B cell (primary cell): ENCODE measurements at regions of chr1 and their contacts with region 1.

Region 1: GRCh38 chr1:52141513-52142219 is at the start of gene ZFYVE9:
- DNase-seq: peak; percentile 85
- ATAC-seq: peak; percentile 85
- H3K4me3 ChIP-seq: peak within 1 kb of the TSS; percentile 30 to 80 (median 61)
- H3K4me3 Mint-ChIP-seq: peak within 1 kb of the TSS; percentile 86
- H3K27ac ChIP-seq: peak within 1 kb of the TSS in 1 of 2 donors; percentile 51
- H3K27ac Mint-ChIP-seq: peak within 1 kb of the TSS; percentile 43
- H3K4me1 ChIP-seq: peaks cover 14 to 18% of the 10 kb centered on the region in 2 donors
- H3K4me1 Mint-ChIP-seq: peaks cover 27% of the 10 kb centered on the region
- H3K27me3 ChIP-seq: peaks cover 0 to 34% (median 29%) of the 10 kb centered on the region in 4 experiments
- H3K27me3 Mint-ChIP-seq: peaks cover 39% of the 10 kb centered on the region
- CTCF ChIP-seq: peak; percentile 83
- total RNA-seq, gene ZFYVE9: 3.3 and 3.4 TPM in 2 replicates

Region 2: DNA sequence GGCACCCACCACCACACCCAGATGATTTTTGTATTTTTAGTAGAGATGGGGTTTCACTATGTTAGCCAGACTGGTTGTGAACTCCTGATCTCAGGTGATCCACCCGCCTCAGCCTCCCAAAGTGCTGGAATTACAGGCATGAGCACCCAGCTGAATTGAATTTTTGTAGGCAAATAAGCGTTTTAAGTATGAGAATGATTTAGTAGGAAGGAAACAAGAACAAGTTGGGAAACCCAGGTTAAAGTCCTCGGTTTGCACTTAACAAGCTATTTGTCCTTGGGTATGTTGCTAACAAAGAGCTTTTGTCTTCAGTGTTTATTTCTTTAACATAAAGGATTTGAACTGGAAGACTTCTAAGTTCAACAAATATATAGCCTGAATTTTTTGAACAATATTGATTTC is 61.7 kb before region 1 on chr1:
- CTCF ChIA-PET with region 1: no interaction called
- POLR2A ChIA-PET with region 1: no interaction called
- intact Hi-C with region 1: no loop called
- DNase-seq: no peak
- ATAC-seq: no peak
- H3K4me3 ChIP-seq: no peak overlapping the region
- H3K4me3 Mint-ChIP-seq: no peak overlapping the region
- H3K27ac ChIP-seq: no peak overlapping the region
- H3K27ac Mint-ChIP-seq: no peak overlapping the region
- H3K4me1 ChIP-seq: no peaks in the 10 kb centered on the region
- H3K4me1 Mint-ChIP-seq: peaks cover 1% of the 10 kb centered on the region
- H3K27me3 ChIP-seq: no peaks in the 10 kb centered on the region
- H3K27me3 Mint-ChIP-seq: no peaks in the 10 kb centered on the region
- CTCF ChIP-seq: no peak

Region 3: DNA sequence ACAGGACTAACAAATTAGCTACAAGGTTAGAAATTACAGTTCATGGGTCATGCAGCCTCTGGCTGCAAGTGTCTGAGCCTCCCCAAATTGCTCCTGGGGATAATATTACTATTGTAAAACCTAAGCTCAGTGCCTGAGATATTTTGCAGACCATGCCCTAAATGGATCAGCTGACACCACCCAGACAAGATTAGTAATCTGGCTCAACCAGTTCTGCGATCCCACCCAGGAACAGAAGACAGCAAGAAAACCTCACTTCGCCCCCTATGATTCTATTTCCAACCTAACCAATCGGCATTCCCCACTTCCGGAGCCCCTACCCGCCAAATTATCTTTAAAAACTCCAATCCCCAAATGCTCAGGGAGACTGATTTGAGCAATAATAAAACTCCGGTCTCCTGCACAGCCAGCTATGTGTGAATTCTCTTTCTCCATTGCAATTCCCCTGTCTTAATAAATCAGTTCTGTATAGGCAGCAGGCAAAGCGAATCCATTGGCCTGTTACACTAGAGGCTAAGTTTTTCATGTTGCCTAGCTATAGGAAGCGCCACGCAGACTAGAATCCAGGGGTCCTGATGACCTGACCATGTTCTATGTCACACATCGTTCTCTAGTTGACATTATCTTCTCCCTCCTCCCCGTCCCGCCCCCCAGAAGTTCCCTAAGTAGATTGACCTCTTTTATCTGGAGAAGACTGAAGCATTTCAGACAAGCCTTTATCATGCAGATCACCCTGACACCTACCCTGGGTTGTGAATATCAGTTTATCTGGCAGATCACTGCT is 22.2 kb before region 1 on chr1:
- CTCF ChIA-PET with region 1: no interaction called
- POLR2A ChIA-PET with region 1: no interaction called
- intact Hi-C with region 1: no loop called
- DNase-seq: no peak
- ATAC-seq: no peak
- H3K4me3 ChIP-seq: no peak overlapping the region
- H3K4me3 Mint-ChIP-seq: no peak overlapping the region
- H3K27ac ChIP-seq: no peak overlapping the region
- H3K27ac Mint-ChIP-seq: no peak overlapping the region
- H3K4me1 ChIP-seq: no peaks in the 10 kb centered on the region
- H3K4me1 Mint-ChIP-seq: no peaks in the 10 kb centered on the region
- H3K27me3 ChIP-seq: peaks cover 0 to 3% (median 0%) of the 10 kb centered on the region in 4 experiments
- H3K27me3 Mint-ChIP-seq: peaks cover 23% of the 10 kb centered on the region
- CTCF ChIP-seq: no peak

Region 4: GRCh38 chr1:52296345-52296744 is 154.7 kb after region 1 on chr1:
- CTCF ChIA-PET with region 1: interaction called, 8 read pairs
- POLR2A ChIA-PET with region 1: no interaction called
- intact Hi-C with region 1: loop called (anchors 1 kb)
- DNase-seq: peak; percentile 36
- ATAC-seq: no peak
- H3K4me3 ChIP-seq: no peak overlapping the region
- H3K4me3 Mint-ChIP-seq: no peak overlapping the region
- H3K27ac ChIP-seq: no peak overlapping the region
- H3K27ac Mint-ChIP-seq: no peak overlapping the region
- H3K4me1 ChIP-seq: no peaks in the 10 kb centered on the region
- H3K4me1 Mint-ChIP-seq: no peaks in the 10 kb centered on the region
- H3K27me3 ChIP-seq: no peaks in the 10 kb centered on the region
- H3K27me3 Mint-ChIP-seq: no peaks in the 10 kb centered on the region
- CTCF ChIP-seq: peak; percentile 65

Region 5: GRCh38 chr1:52404116-52404986 is 262.7 kb after region 1 on chr1 and contains the starts of genes ORC1 and PRPF38A:
- CTCF ChIA-PET with region 1: interaction called, 3 read pairs
- POLR2A ChIA-PET with region 1: no interaction called
- intact Hi-C with region 1: loop called (anchors 1 kb)
- DNase-seq: peak; percentile 98
- ATAC-seq: peak; percentile 98
- H3K4me3 ChIP-seq: peak within 1 kb of the TSS; percentile 76 to 99 (median 95)
- H3K4me3 Mint-ChIP-seq: peak within 1 kb of the TSS; percentile 100
- H3K27ac ChIP-seq: peak within 1 kb of the TSS; percentile 91 to 95
- H3K27ac Mint-ChIP-seq: peak within 1 kb of the TSS; percentile 96
- H3K4me1 ChIP-seq: peaks cover 15 to 22% of the 10 kb centered on the region in 2 donors
- H3K4me1 Mint-ChIP-seq: peaks cover 32% of the 10 kb centered on the region
- H3K27me3 ChIP-seq: no peaks in the 10 kb centered on the region
- H3K27me3 Mint-ChIP-seq: no peaks in the 10 kb centered on the region
- CTCF ChIP-seq: peak; percentile 60
- total RNA-seq, gene ORC1: 1.3 TPM in 2 replicates
- total RNA-seq, gene PRPF38A: 68.1 and 69.8 TPM in 2 replicates

Region 6: DNA sequence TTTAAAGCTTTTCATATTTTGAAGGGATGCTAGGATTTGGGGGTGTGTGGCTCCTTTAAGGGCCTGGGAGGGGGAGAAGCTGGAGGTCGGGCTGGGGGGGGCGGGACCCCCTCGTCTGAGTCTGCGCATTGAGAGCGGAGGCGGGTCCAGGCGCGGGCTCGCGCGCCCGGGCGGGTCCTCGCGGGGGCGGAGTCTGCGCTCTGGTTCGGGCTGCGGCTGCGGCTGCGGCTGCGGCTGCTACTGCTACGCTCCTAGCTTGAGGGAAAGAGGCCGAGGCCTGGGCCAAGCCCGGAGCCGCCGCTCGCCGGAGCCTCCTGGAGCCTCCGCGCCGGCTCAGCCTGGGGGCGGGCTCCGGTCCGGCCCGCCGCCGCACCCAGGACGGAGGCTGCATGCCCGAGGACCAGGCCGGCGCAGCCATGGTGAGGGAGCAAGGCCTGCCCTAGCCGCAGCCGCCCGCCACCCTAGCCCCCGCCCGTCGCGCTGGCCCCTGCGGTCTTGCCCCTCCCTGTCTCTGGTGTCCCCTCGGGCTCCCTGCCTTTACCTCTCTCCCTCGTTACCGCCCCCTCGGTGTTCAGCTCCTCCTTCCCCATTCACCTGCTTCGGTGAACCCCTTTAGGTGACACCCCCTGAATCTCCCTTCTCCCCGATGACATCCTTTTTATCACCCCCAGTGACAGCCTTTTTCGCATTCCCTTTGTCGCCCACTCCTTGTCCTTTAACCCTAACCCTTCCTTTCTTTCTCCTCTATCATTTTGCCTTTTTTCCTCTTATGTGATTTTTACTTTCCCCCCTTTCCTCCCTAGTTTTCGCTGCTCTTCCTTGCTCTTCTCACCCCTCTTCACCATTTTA is 584.8 kb after region 1 on chr1 and contains the start of gene ZYG11B:
- CTCF ChIA-PET with region 1: no interaction called
- POLR2A ChIA-PET with region 1: no interaction called
- intact Hi-C with region 1: loop called (anchors 5 kb)
- DNase-seq: peak; percentile 95
- ATAC-seq: peak; percentile 95
- H3K4me3 ChIP-seq: peak within 1 kb of the TSS; percentile 56 to 92 (median 76)
- H3K4me3 Mint-ChIP-seq: peak within 1 kb of the TSS; percentile 95
- H3K27ac ChIP-seq: peak within 1 kb of the TSS in 1 of 2 donors; percentile 66
- H3K27ac Mint-ChIP-seq: peak within 1 kb of the TSS; percentile 88
- H3K4me1 ChIP-seq: peaks cover 8 to 12% of the 10 kb centered on the region in 2 donors
- H3K4me1 Mint-ChIP-seq: peaks cover 35% of the 10 kb centered on the region
- H3K27me3 ChIP-seq: no peaks in the 10 kb centered on the region
- H3K27me3 Mint-ChIP-seq: peaks cover 4% of the 10 kb centered on the region
- CTCF ChIP-seq: no peak
- total RNA-seq, gene ZYG11B: 22.3 and 22.7 TPM in 2 replicates

Region 7: DNA sequence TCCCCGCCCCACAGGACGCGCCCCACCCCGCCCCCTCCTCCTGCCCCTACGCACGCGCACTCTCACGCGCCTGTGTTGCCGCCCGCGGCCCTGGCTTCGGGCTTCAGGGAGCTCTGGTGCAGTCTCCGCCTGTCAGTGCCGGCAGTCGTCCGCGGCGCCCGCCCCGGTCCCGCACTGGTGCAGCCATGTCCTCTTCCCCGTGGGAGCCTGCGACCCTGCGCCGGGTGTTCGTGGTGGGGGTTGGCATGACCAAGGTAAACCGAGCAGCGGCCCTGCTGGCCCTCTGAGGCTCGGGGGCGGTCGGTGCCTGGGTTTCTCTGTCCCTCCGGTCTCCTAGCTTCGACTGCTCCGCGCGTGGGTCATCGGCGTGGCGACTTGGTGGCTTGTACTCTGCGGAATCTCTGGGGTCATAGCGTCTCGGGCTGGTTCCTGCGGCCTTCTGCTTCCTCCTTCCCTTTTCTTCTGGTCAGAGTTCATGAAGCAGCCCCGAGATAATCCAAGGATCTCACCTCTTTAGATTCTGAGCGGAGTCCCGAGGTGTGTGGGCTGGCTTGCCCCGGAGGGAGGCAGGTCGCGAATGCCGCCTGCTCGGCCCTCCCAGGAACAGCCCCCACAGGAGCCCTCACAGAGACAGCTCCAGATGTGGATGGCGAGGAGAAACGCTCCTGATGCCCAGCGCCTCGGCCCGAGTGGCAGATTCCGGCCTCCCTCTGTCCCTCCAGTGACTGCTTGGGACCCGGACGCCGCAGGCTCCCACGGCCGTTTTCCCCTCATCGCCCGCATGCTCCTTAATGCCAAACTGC is 785.7 kb after region 1 on chr1 and contains the start of gene SCP2:
- CTCF ChIA-PET with region 1: no interaction called
- POLR2A ChIA-PET with region 1: no interaction called
- intact Hi-C with region 1: loop called (anchors 10 kb)
- DNase-seq: peak; percentile 72
- ATAC-seq: peak; percentile 86
- H3K4me3 ChIP-seq: peak within 1 kb of the TSS; percentile 59 to 85 (median 82)
- H3K4me3 Mint-ChIP-seq: peak within 1 kb of the TSS; percentile 89
- H3K27ac ChIP-seq: peak within 1 kb of the TSS in 1 of 2 donors; percentile 61
- H3K27ac Mint-ChIP-seq: peak within 1 kb of the TSS; percentile 22
- H3K4me1 ChIP-seq: peaks cover 10 to 19% of the 10 kb centered on the region in 2 donors
- H3K4me1 Mint-ChIP-seq: peaks cover 19% of the 10 kb centered on the region
- H3K27me3 ChIP-seq: peaks cover 0 to 20% (median 7%) of the 10 kb centered on the region in 4 experiments
- H3K27me3 Mint-ChIP-seq: peaks cover 12% of the 10 kb centered on the region
- CTCF ChIP-seq: no peak
- total RNA-seq, gene SCP2: 45.0 and 46.6 TPM in 2 replicates